Posterior vena cava (tissue), 2 donors: ENCODE measurements at regions of chr17 and their contacts with region 1.

Region 1: GRCh38 chr17:10844621-10845387 is 6.9 kb upstream of the PIRT start:
- DNase-seq: peak; percentile 91

Region 2: DNA sequence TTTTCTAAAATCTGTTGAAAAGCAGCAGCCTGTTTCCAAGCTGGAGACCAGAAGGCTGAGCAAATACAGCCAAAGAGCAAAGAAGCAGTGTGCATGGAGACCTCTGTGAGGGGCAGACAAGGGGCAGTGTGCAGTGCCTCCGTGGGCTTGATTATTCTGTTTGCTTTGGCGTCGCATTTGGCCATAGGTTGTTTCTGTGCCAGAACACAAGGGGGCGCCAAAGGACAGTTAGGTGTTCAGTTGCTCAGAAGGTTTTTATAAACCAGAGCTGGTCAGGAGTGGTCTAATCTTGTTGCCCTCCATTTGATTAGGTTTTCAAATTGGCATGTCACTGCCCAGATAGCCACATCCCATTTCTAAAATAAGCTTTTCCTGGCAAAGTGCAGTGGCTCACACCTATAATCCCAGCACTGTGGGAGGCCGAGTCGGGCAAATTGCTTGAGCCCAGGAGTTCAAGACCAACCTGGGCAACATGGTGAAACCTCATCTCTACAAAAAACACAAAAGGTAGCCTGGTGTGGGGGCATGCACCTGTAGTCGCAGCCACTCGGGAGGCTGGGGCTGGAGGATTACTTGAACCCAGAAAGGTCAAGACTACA is 198.3 kb before region 1 on chr17:
- intact Hi-C with region 1: loop called in 1 of 2 experiments (anchors 5 kb)
- DNase-seq: peak; percentile 87

Region 3: GRCh38 chr17:10738521-10739258 is 106.1 kb before region 1 on chr17:
- intact Hi-C with region 1: loop called in 1 of 2 experiments (anchors 2 kb)
- DNase-seq: peak; percentile 51

Region 4: DNA sequence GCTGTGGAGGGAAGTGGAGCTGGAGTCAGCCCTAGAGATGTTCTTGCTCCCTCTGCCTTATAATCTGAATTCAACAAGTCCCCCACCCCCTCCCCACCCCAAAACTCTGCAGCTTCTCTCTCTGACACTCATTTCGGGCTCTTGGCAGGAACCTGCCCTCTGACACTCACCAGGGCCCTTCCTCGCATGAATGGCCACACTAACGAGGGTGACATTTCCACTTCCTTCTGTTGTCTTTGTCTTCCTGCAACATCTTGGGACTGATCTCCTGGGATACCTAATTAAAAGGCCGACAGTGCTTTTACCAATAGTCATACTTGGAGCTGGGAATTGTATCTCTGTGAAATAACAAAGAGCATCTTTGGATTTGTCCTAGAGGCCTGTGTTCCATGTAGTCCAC is 100.0 kb after region 1 on chr17:
- intact Hi-C with region 1: no loop called
- DNase-seq: no peak

Region 5: DNA sequence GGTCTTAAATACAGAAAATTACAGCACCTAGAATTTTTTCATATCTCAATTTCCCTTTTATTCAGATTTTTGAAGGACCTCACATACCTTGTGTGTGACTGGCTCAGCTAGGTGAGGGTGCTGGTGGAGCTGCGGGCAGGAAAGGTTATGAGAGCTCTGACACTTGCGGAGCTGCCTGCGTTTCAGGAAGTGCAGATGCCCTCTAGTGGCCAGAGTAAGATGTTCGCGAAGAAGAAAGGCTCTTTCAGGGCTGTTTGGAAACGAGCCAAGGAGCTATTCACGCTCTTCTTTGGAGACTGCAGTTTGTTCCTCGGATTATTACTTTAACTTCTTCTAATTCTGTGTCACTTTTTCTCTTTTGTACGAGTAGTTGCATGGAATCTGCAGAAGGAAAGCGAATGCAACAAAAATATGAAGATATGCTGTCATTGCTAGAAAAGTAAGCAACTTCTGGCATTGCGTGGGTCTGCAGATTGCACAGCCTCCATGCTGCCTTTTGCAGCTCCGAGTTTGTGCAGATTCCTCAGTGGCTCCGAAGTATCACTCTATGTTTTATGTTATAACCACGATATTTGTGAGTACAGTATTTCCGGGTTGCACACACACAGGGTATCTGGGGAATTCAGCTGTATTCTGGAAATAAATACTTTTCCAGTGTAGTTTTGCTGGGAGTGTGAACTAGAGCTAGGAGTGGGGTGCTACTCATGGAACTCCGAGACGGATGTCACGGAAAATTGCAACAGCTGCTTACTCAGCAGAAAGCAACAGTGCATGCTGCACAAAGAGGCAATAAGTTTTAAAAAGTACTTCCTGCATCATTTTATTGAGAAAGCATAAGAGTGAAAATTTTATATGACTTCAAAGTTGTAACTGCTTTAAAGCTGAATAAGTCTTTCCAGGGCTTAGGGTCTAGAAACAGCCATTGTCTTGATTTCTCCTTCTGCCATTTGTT is 799.7 kb after region 1 on chr17:
- intact Hi-C with region 1: no loop called
- DNase-seq: no peak